ENCODE measurements at regions of chr7 and their contacts with region 1.

Region 1: GRCh38 chr7:116236020-116236630 is 25.8 kb downstream of the TES start:
- DNase-seq: peak; percentile 77
- ATAC-seq: peak; percentile 65
- H3K4me3 Mint-ChIP-seq: no peak overlapping the region
- H3K27ac Mint-ChIP-seq: no peak overlapping the region
- H3K4me1 Mint-ChIP-seq: peaks cover 62% of the 10 kb centered on the region
- H3K27me3 Mint-ChIP-seq: no peaks in the 10 kb centered on the region
- CTCF ChIP-seq: peak; percentile 64

Region 2: DNA sequence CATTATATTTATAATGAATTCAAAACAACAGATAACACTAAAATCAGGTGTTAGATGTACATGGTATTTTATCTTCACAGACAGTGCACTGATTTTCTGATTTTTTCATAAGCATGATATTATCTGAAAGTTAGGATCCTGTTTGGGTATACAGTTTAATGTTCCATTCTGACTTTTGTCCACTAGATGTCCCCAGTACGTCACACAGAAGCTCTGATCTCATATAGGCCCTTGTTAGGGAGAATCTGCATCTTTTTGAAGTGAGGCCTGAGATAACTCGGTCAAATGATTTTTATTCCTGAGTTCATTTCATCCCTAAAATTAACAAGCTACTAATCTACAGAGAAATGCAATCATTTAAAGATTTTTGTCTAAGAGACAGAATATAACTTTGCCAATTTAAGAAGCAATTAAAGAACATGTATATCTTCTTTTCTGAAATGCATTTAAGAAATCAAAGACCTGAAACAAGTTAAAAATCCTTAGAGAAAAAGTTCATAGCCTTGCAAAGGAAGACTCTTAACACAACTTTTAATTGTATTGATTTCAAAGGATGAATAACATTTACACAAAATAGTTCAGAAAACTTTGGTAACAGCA is 97.8 kb before region 1 on chr7:
- CTCF ChIA-PET with region 1: interaction called, 37 read pairs
- POLR2A ChIA-PET with region 1: no interaction called
- intact Hi-C with region 1: loop called (anchors 2 kb)
- DNase-seq: peak; percentile 32
- ATAC-seq: peak; percentile 84
- H3K4me3 Mint-ChIP-seq: no peak overlapping the region
- H3K27ac Mint-ChIP-seq: no peak overlapping the region
- H3K4me1 Mint-ChIP-seq: peaks cover 9% of the 10 kb centered on the region
- H3K27me3 Mint-ChIP-seq: peaks cover 4% of the 10 kb centered on the region
- CTCF ChIP-seq: peak; percentile 71

Region 3: GRCh38 chr7:116173051-116174028 is 62.8 kb before region 1 on chr7:
- CTCF ChIA-PET with region 1: interaction called, 294 read pairs
- POLR2A ChIA-PET with region 1: no interaction called
- intact Hi-C with region 1: no loop called
- DNase-seq: peak; percentile 27
- ATAC-seq: no peak
- H3K4me3 Mint-ChIP-seq: no peak overlapping the region
- H3K27ac Mint-ChIP-seq: no peak overlapping the region
- H3K4me1 Mint-ChIP-seq: no peaks in the 10 kb centered on the region
- H3K27me3 Mint-ChIP-seq: peaks cover 3% of the 10 kb centered on the region
- CTCF ChIP-seq: peak; percentile 76

Region 4: DNA sequence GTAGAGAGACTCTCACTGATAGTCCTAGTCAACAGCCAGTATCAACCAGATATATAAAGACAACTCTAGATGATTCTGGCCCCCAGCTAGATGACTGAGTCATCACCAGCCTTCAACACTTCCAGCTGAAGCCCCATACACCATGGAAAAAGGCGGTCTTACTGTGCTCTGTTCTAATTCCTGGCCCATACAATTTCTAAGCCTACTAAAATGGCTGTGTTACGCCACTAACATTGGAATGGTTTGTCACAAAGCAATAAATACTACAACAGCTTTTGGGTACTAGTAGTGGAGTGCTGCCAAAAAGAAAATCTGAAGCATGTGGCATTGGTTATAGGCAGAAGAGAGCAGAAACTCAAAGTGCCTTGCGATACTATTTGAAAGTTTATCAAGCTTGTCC is 38.8 kb before region 1 on chr7:
- CTCF ChIA-PET with region 1: interaction called, 13 read pairs
- POLR2A ChIA-PET with region 1: interaction called, 3 read pairs
- intact Hi-C with region 1: no loop called
- DNase-seq: no peak
- ATAC-seq: no peak
- H3K4me3 Mint-ChIP-seq: no peak overlapping the region
- H3K27ac Mint-ChIP-seq: no peak overlapping the region
- H3K4me1 Mint-ChIP-seq: no peaks in the 10 kb centered on the region
- H3K27me3 Mint-ChIP-seq: peaks cover 2% of the 10 kb centered on the region
- CTCF ChIP-seq: no peak

Region 5: DNA sequence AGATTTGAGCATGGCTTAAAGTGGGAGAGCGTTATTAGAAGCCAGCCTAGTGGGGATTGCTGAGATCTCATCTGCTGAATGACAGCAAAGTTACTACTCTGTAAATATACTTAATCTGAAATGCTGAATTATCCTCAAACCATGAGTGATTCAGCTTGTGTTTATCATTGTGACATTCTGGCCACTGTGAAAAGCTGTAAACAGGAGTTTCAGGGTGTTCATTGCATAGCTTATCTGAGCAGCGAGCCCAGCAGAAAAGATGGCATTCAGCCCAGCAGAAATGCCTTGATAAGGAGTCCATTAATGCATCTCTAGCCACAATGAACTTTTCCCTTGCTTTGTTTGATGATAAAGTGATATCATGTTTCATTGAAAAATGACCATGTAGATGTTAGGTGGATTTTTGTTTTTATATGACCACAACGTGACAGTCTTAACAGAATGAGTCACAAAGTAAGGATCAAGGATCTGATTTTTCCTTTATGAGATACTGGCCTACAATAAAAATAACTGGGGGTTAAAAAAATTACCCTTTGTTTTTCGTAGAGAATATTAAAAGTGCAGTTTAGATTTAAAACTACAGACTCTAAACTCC is 18.0 kb before region 1 on chr7:
- CTCF ChIA-PET with region 1: interaction called, 31 read pairs
- POLR2A ChIA-PET with region 1: no interaction called
- intact Hi-C with region 1: no loop called
- DNase-seq: no peak
- ATAC-seq: no peak
- H3K4me3 Mint-ChIP-seq: no peak overlapping the region
- H3K27ac Mint-ChIP-seq: no peak overlapping the region
- H3K4me1 Mint-ChIP-seq: peaks cover 80% of the 10 kb centered on the region
- H3K27me3 Mint-ChIP-seq: no peaks in the 10 kb centered on the region
- CTCF ChIP-seq: no peak

Region 6: DNA sequence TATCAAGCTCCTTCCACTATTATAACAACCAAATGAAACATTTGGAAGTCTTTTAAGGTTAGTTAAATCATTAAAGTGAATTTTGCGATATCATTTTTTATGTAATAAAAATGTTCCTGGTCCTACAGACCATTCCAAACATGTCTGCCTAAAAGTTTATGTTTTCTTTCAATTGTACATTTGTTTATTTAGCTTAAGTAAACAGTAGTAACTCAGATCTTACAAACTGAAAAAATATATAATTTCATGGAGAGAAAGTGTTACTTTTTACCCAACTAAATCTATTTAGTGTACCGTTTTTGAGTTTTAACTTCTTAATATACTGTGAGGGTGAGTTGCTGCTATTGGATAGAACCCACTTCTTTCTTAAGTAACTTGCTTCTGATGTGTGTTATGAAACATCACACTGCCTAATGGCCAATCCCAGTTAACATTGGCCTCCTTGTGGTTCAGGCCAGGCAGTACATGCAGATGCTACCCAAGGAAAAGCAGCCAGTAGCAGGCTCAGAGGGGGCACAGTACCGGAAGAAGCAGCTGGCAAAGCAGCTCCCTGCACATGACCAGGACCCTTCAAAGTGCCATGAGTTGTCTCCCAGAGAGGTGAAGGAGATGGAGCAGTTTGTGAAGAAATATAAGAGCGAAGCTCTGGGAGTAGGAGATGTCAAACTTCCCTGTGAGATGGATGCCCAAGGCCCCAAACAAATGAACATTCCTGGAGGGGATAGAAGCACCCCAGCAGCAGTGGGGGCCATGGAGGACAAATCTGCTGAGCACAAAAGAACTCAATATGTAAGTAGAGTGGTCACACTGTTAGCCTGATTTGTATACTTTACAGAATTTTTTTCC is 13.8 kb after region 1 on chr7:
- CTCF ChIA-PET with region 1: interaction called, 46 read pairs
- POLR2A ChIA-PET with region 1: interaction called, 3 read pairs
- intact Hi-C with region 1: no loop called
- DNase-seq: peak; percentile 26
- ATAC-seq: peak; percentile 75
- H3K4me3 Mint-ChIP-seq: no peak overlapping the region
- H3K27ac Mint-ChIP-seq: no peak overlapping the region
- H3K4me1 Mint-ChIP-seq: peaks cover 26% of the 10 kb centered on the region
- H3K27me3 Mint-ChIP-seq: no peaks in the 10 kb centered on the region
- CTCF ChIP-seq: peak; percentile 34

Region 7: GRCh38 chr7:116340943-116341907 is 105.1 kb after region 1 on chr7:
- CTCF ChIA-PET with region 1: no interaction called
- POLR2A ChIA-PET with region 1: no interaction called
- intact Hi-C with region 1: no loop called
- DNase-seq: no peak
- ATAC-seq: no peak
- H3K4me3 Mint-ChIP-seq: no peak overlapping the region
- H3K27ac Mint-ChIP-seq: no peak overlapping the region
- H3K4me1 Mint-ChIP-seq: no peaks in the 10 kb centered on the region
- H3K27me3 Mint-ChIP-seq: peaks cover 7% of the 10 kb centered on the region
- CTCF ChIP-seq: no peak

Region 8: DNA sequence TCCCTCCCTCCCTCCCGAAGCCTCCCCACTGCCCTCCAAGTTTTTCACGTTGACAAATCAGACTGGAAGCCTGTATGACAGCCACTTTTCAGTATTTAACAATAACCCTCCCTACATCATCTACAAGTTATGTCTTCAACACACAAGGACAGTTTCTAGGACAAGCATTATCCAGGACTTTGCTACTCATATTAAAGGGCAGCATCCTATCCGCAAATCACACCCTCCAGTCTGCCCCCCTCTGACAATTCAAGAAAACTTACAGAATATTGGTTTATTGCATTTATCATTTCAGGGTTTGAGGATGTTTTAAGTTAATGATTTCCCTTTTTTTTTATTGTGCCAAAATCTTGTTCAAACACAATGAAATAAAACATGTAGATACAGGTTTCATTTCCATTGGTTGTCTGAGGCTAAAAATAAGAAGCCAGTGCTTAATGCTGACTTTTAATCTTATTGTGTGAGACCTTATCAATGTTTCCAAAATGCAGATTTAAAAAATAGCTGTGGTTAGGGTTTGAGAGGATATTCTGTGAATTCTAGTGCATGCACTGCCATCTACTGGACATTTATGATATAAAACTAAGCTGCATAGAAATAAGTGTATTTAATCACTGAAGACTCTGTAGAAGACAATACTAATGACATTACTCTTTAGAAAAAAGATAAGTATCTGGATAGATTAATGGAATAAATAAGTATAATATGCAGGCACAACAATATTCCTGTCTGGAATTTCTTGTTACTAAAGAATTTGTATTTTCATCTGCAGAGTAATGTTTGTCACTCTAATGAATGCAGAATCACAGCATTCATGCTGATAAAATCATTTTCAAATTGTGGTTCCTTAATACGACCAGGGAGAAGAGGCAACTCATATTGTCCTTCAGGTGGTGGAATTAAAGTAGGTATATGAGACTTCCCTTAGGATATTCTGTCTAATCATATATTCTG is 352.8 kb after region 1 on chr7:
- CTCF ChIA-PET with region 1: interaction called, 17 read pairs
- POLR2A ChIA-PET with region 1: no interaction called
- intact Hi-C with region 1: no loop called
- DNase-seq: no peak
- ATAC-seq: peak; percentile 21
- H3K4me3 Mint-ChIP-seq: no peak overlapping the region
- H3K27ac Mint-ChIP-seq: peak overlapping the region; percentile 61
- H3K4me1 Mint-ChIP-seq: peaks cover 26% of the 10 kb centered on the region
- H3K27me3 Mint-ChIP-seq: peaks cover 22% of the 10 kb centered on the region
- CTCF ChIP-seq: peak; percentile 85

Region 9: DNA sequence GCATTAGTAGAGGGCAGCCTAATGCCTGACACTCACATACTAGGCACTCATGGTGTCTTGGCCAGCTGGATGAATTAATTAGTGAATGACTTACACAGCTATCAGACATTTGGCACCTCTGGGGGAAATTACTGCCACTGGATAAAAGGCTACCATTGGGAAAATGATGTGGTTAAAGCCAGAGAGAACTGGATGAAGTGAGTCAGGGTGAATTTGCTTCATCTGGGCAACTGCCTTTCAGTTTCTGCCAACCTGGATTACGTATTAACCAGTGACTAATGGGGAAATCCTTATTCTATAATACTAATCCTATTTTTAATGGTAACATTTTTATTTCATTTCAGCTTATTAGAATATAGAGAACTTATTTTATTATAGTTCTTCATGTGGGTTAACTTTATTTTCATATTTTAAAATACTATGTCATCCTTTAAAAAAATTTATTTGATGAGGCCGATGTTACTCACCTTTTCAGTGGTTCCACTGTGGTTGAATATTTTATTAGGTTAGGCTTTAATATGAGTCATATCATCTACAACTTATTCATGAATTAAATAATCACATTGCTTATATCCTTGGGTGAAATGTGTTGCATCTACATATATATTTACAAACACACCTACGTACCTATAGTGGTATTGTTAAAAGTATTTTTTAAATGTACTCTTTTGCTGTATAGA is 540.6 kb after region 1 on chr7:
- CTCF ChIA-PET with region 1: no interaction called
- POLR2A ChIA-PET with region 1: no interaction called
- intact Hi-C with region 1: no loop called
- DNase-seq: peak; percentile 5
- ATAC-seq: peak; percentile 63
- H3K4me3 Mint-ChIP-seq: no peak overlapping the region
- H3K27ac Mint-ChIP-seq: no peak overlapping the region
- H3K4me1 Mint-ChIP-seq: peaks cover 6% of the 10 kb centered on the region
- H3K27me3 Mint-ChIP-seq: peaks cover 5% of the 10 kb centered on the region
- CTCF ChIP-seq: no peak

Measured in activated CD8-positive, alpha-beta T cell treated with anti-CD3 and anti-CD28 coated beads for 36 hours (primary cell).